IMR-90 (cell line): ENCODE measurements at regions of chr13 and their contacts with region 1.

Region 1: DNA sequence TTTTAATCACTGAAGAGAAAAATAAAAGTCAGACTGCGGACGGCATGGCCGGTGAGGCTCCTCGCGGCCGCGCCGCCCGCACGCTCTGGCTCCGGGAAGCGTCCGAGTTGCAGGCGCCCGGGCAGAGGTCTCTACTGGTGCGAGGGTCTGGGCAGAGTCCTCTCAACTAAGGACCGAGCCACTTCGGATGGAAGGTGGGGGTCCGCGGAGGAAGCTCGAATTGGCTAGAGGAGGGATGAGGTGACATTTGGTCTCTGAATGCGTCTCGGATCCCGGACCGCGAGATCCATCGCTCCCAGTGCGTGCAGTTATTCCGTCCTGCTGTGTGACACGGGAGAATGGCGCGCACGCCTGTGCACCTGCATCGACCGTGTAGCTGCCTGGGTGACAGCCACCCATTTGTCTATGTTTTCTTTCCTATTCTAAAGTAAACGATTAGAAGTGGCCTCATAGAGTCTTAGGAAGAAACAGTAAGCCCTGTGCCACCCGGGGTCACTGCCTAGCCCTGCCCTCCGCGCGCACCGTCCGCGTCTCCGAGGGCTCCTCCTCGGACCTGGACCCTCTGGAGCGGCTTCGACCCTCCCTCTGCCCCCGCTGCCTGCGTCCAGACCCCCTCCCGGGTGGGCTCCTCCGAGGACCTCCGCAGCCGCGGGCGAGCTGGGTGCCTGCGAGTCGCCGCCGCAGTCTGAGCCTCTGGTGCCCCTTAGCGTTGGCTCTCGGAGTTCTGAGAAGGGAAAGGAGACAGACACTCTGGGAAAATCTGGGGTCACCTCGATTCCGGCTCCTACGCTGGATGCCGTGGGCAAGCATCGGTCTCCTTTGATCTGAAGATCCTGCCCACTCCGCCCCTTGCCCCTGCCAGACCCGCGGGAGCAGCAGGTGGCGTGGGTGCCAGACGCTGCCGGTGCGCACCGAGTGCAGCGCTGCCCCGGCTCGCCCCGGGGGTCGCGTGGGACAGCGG is 347.4 kb downstream of the LIG4 start:
- DNase-seq: peak; percentile 57
- ATAC-seq: peak; percentile 63
- H3K4me3 ChIP-seq: peak overlapping the region; percentile 92
- H3K27ac ChIP-seq: peak overlapping the region; percentile 82
- H3K4me1 ChIP-seq: no peaks in the 10 kb centered on the region
- H3K27me3 ChIP-seq: no peaks in the 10 kb centered on the region
- CTCF ChIP-seq: peak; percentile 76
- POLR2A ChIP-seq: no peak
- RAD21 ChIP-seq: peak; percentile 89

Region 2: DNA sequence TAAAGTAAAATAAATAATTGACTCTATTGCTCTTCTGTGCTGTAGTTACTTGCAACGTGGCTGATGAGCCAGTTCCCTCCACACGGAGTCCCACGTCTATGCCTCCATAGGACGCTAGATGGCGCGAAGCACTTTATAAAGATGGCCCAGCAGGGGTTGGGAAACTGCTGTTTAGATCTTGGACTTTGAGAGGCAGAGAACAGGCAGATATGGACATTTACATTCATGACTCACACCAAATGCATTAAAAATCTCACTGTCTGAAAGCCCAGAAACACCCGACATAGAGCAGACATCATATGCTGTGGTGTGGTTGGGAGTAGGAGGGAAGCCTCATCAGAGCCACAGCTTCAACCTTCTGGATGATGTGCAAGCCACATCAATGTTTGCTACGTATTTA is 656.9 kb before region 1 on chr13:
- CTCF ChIA-PET with region 1: no interaction called
- POLR2A ChIA-PET with region 1: no interaction called
- dilution Hi-C with region 1: no loop called
- in situ Hi-C with region 1: loop called (anchors 5 kb)
- intact Hi-C with region 1: loop called (anchors 2 kb)
- DNase-seq: peak; percentile 97
- ATAC-seq: peak; percentile 97
- H3K4me3 ChIP-seq: no peak overlapping the region
- H3K27ac ChIP-seq: no peak overlapping the region
- H3K4me1 ChIP-seq: peaks cover 5% of the 10 kb centered on the region
- H3K27me3 ChIP-seq: no peaks in the 10 kb centered on the region
- CTCF ChIP-seq: peak; percentile 98
- POLR2A ChIP-seq: no peak
- RAD21 ChIP-seq: peak; percentile 94

Region 3: DNA sequence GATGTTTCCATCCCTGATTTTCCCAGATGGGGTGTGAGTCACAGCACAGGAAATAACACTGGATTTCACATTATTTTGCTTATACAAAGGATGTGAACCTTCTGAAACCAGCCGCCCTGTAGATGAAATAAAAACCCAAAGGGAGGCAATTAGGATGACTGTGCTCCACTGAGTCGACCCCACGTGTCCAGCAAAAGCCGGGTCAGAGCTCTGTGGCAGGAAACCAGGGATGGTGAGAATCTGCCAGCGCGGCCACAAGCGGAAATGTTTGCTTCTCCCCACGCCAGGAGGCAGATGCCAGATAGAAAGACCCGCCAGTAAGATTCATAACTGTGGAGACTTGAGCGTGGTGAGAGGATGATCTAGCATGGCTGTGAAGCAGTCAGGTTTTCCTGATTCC is 417.1 kb before region 1 on chr13:
- CTCF ChIA-PET with region 1: no interaction called
- POLR2A ChIA-PET with region 1: no interaction called
- dilution Hi-C with region 1: no loop called
- in situ Hi-C with region 1: no loop called
- intact Hi-C with region 1: loop called (anchors 5 kb)
- DNase-seq: peak; percentile 99
- ATAC-seq: peak; percentile 95
- H3K4me3 ChIP-seq: no peak overlapping the region
- H3K27ac ChIP-seq: peak overlapping the region; percentile 50
- H3K4me1 ChIP-seq: peaks cover 16% of the 10 kb centered on the region
- H3K27me3 ChIP-seq: no peaks in the 10 kb centered on the region
- CTCF ChIP-seq: no peak
- POLR2A ChIP-seq: no peak
- RAD21 ChIP-seq: peak; percentile 29; the same call in 1 of the 2 replicates

Region 4: GRCh38 chr13:107650081-107650701 is 217.8 kb before region 1 on chr13:
- CTCF ChIA-PET with region 1: no interaction called
- POLR2A ChIA-PET with region 1: no interaction called
- dilution Hi-C with region 1: no loop called
- in situ Hi-C with region 1: no loop called
- intact Hi-C with region 1: loop called (anchors 1 kb)
- DNase-seq: peak; percentile 62
- ATAC-seq: peak; percentile 60
- H3K4me3 ChIP-seq: no peak overlapping the region
- H3K27ac ChIP-seq: no peak overlapping the region
- H3K4me1 ChIP-seq: no peaks in the 10 kb centered on the region
- H3K27me3 ChIP-seq: no peaks in the 10 kb centered on the region
- CTCF ChIP-seq: peak; percentile 94
- POLR2A ChIP-seq: no peak
- RAD21 ChIP-seq: peak; percentile 80

Region 5: GRCh38 chr13:107743983-107744382 is 124.0 kb before region 1 on chr13:
- CTCF ChIA-PET with region 1: no interaction called
- POLR2A ChIA-PET with region 1: no interaction called
- dilution Hi-C with region 1: no loop called
- in situ Hi-C with region 1: no loop called
- intact Hi-C with region 1: loop called (anchors 2 kb)
- DNase-seq: peak; percentile 84
- ATAC-seq: peak; percentile 71
- H3K4me3 ChIP-seq: no peak overlapping the region
- H3K27ac ChIP-seq: no peak overlapping the region
- H3K4me1 ChIP-seq: peaks cover 5% of the 10 kb centered on the region
- H3K27me3 ChIP-seq: no peaks in the 10 kb centered on the region
- CTCF ChIP-seq: no peak
- POLR2A ChIP-seq: no peak
- RAD21 ChIP-seq: no peak

Region 6: DNA sequence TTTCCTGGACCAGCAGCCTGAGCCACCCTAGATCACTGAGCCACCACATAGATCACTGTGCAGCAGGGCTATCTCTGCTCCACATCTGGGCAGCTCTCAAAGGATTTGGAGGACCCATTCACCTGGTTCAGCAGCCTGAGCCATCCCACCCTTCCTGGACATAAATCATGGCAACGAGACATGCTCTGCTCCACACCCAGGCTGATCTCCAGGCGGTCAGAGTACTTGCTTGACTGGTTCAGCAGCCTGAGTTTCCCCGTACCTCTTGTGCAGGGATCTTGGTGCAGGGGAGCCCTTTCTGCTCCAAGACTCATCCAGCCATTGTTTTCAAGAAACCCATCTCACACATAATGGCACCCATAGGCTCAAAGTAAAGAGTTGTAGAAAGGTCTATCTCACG is 152.0 kb after region 1 on chr13:
- CTCF ChIA-PET with region 1: no interaction called
- POLR2A ChIA-PET with region 1: no interaction called
- dilution Hi-C with region 1: no loop called
- in situ Hi-C with region 1: no loop called
- intact Hi-C with region 1: no loop called
- DNase-seq: no peak
- ATAC-seq: no peak
- H3K4me3 ChIP-seq: no peak overlapping the region
- H3K27ac ChIP-seq: no peak overlapping the region
- H3K4me1 ChIP-seq: no peaks in the 10 kb centered on the region
- H3K27me3 ChIP-seq: no peaks in the 10 kb centered on the region
- CTCF ChIP-seq: no peak
- POLR2A ChIP-seq: no peak
- RAD21 ChIP-seq: no peak

Region 7: GRCh38 chr13:108155185-108156106 is 287.5 kb after region 1 on chr13:
- CTCF ChIA-PET with region 1: no interaction called
- POLR2A ChIA-PET with region 1: no interaction called
- dilution Hi-C with region 1: no loop called
- in situ Hi-C with region 1: no loop called
- intact Hi-C with region 1: loop called (anchors 5 kb)
- DNase-seq: peak; percentile 52
- ATAC-seq: peak; percentile 65; the same call in 1 of the 2 replicates
- H3K4me3 ChIP-seq: no peak overlapping the region
- H3K27ac ChIP-seq: no peak overlapping the region
- H3K4me1 ChIP-seq: no peaks in the 10 kb centered on the region
- H3K27me3 ChIP-seq: peaks cover 2% of the 10 kb centered on the region
- CTCF ChIP-seq: peak; percentile 85
- POLR2A ChIP-seq: no peak
- RAD21 ChIP-seq: peak; percentile 78